Activated CD4-positive, alpha-beta T cell treated with anti-CD3 and anti-CD28 coated beads, Interleukin-2, amount 10 ng/mL, durations not matched to agents 24 days and 14 days (primary cell): ENCODE measurements at regions of chr13 and their contacts with region 1.

Region 1: DNA sequence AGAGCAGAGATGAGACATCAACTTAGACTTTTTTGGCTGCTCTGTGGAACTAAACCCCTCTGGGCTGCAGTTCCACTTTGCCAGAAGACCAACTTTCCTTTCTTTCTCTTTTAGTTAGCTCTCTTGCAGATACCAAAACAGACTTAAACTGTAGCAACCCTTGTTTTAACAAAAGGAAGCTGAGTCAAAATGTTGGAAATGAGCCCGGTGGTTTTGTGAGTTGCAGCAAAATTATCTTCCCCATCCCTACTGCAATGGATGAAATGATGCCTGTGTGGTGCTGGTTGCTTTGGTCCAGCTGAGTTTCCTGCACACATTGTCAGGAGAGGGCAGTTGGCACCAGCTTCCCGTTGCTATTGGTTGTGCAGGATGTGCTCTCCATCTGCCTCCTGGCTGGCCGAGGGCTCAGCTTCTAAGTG is 115.3 kb downstream of the LRCH1 start:
- DNase-seq: peak; percentile 77
- H3K4me3 Mint-ChIP-seq: peak overlapping the region; percentile 88
- H3K27ac Mint-ChIP-seq: peak overlapping the region; percentile 85
- H3K4me1 Mint-ChIP-seq: peaks cover 50% of the 10 kb centered on the region
- H3K27me3 Mint-ChIP-seq: no peaks in the 10 kb centered on the region

Region 2: DNA sequence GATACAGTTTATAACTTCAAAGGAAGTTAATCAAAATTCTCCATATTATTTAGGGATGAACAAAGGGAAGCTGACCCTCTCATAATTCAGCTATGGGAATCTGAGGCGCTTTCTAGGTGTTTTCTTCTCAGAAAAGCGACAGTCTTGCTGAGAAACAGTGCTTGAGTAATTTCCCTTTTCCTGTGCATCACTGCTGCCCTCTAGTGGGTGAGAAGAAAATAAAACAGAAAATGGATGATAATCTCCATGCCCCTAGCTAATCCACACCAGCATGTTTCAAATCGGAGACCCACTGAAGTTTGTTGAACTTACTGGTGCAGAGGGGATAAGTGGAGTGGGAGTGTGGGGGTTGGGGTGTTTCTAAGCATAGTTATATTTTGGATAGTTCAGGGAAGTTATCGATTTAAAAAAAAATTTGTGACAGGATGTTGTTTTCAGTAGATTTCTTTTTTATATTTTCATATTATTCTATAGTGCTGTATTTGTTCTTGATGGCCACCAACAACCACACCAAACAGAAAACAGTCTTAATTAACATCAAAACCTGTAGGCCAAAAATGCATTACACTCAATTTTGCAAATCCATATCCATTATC is 507.7 kb before region 1 on chr13:
- intact Hi-C with region 1: loop called (anchors 10 kb)
- DNase-seq: peak; percentile 85
- H3K4me3 Mint-ChIP-seq: peak overlapping the region; percentile 76
- H3K27ac Mint-ChIP-seq: peak overlapping the region; percentile 83
- H3K4me1 Mint-ChIP-seq: peaks cover 48% of the 10 kb centered on the region
- H3K27me3 Mint-ChIP-seq: no peaks in the 10 kb centered on the region

Region 3: DNA sequence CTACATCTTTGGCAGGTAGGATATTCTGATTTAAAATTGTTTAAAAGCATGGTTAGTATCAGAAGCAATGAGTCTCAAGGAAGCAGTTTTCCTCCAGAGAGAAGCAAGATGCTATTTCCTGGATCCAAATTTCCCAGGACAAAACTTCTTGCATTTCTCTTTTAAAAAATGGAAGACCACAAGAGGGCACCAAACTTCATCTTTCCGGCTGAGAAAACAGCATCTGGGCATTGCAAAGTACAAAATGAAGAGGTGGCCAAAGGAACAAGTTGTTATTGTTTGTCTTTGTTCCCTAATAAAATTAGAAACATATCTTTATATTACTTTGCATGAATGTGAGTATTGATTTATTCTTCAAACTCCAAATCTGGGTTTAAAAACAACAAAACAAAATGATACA is 175.4 kb before region 1 on chr13:
- intact Hi-C with region 1: no loop called
- DNase-seq: peak; percentile 71
- H3K4me3 Mint-ChIP-seq: no peak overlapping the region
- H3K27ac Mint-ChIP-seq: no peak overlapping the region
- H3K4me1 Mint-ChIP-seq: peaks cover 3% of the 10 kb centered on the region
- H3K27me3 Mint-ChIP-seq: no peaks in the 10 kb centered on the region

Region 4: GRCh38 chr13:46577696-46578589 is 90.4 kb before region 1 on chr13:
- intact Hi-C with region 1: loop called (anchors 5 kb)
- DNase-seq: no peak
- H3K4me3 Mint-ChIP-seq: peak overlapping the region; percentile 45
- H3K27ac Mint-ChIP-seq: peak overlapping the region; percentile 65
- H3K4me1 Mint-ChIP-seq: peaks cover 46% of the 10 kb centered on the region
- H3K27me3 Mint-ChIP-seq: no peaks in the 10 kb centered on the region

Region 5: DNA sequence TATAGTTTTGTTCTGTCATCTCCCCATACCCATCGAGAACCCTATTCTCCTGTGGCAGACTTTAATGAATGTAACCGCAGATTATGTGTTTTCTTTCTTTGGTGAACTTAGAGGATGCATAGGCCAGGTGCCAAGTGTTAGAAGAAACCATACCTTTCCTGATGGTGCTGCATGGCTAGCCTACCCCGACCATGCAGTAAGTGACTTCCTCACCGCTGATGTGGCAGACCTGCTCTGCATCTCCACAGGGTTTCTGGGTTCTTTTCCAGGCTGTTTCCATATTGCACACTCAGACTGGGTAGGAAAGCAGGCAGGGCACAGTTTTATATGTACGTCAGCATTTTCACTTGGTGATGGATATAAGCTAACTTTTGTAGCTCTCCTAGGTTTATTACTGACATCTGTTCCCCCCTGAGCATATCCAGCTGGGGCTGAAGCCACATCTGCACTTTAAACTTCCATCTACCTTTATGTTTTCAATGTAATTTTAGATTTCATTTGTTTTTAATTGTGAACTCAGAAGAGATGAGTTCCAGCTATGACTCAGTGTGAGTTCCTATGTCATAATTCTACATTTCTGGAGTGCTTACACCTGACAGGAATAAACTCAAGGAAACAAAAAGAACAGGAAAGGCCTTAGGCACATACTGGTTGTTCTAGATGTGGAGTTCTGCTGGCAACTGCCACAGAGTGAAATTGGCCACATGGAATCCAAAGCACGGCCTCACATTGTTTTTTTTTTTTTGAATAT is 73.0 kb before region 1 on chr13:
- intact Hi-C with region 1: loop called (anchors 1 kb)
- DNase-seq: no peak
- H3K4me3 Mint-ChIP-seq: no peak overlapping the region
- H3K27ac Mint-ChIP-seq: no peak overlapping the region
- H3K4me1 Mint-ChIP-seq: peaks cover 60% of the 10 kb centered on the region
- H3K27me3 Mint-ChIP-seq: peaks cover 5% of the 10 kb centered on the region

Region 6: GRCh38 chr13:46655377-46656180 is 12.7 kb before region 1 on chr13:
- intact Hi-C with region 1: loop called (anchors 1 kb)
- DNase-seq: peak; percentile 65
- H3K4me3 Mint-ChIP-seq: peak overlapping the region; percentile 55
- H3K27ac Mint-ChIP-seq: peak overlapping the region; percentile 34
- H3K4me1 Mint-ChIP-seq: peaks cover 31% of the 10 kb centered on the region
- H3K27me3 Mint-ChIP-seq: no peaks in the 10 kb centered on the region

Region 7: DNA sequence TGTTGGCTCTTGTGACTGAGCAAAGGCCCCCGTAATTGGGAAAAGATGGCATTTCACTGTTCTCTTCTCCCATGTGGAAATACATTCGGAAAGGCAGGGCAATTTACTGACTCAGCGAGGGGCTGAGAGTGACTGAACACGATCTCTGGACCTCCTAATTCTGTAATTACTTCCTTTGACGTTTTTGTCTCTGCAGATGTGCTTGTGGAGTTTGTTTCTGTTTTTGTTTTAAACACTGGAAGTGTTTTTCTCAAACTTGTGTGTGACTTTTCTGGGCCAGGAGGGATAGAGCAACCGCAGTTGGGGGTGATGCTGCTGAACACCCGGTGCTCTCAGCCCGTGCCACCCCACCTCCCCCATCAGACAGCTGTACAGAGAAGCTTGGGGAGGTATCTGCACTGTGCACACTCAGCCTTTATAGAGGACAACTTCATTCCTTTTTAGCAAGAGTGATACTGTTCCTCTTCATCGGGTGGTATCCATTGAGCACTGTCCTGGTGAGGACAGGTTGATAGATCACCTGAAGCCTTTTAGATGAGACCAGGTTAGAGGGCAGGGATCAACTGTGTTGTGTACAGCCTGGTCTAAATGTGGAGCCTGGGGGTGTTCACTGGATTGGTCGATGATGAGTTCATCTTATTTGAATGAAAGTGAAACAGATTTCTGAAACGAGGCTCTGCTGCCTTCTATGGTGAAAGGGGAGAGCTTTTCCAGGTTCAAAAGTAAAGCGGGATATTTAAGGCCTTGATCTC is 11.2 kb after region 1 on chr13:
- intact Hi-C with region 1: loop called (anchors 1 kb)
- DNase-seq: peak; percentile 86
- H3K4me3 Mint-ChIP-seq: no peak overlapping the region
- H3K27ac Mint-ChIP-seq: no peak overlapping the region
- H3K4me1 Mint-ChIP-seq: peaks cover 26% of the 10 kb centered on the region
- H3K27me3 Mint-ChIP-seq: no peaks in the 10 kb centered on the region

Region 8: DNA sequence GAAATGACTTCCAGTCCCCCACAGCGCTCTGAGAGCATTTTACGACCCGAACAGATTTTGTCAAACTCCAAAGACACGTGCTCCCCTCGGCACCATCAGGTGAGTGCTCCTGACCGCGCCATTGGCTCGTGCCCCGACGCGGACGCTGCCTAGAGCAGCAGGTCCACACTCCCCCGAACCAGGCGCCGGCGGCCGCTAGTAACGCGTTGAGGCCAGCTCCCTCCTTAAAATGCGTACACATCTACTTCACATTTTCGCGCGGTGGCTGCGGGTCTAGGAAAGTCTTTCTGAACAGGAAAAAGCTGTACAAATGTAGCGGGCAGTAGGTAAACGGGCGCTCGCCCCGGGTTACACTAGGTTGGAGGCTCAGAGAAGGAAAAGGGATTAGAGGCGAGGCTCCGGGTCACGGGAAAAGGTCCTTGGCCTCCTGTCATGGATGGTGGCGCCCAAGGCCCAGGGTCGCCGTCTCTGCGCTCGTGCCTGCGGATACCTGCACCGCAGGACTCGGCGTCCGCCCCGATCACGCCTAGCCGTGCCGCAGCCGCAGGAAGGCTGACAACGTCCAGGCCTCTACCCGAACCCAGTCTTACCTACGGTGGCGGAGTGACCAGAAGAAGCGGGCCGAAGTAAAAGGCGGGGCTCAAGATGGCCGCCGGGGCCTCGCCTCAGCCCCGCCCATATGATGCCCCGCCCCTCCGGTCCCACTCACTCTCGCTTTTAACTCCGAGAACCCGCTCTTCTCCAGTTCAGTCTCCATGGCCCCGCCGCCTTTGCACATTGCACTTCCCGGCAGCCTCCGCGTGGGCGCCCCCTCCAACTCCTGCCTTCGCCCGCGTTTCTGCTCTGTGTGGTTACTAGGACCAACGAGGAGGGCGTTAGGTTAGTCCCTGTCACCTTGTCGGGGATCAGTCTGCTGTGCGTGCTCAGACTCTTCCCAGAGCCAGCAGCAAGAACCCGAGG is 128.5 kb after region 1 on chr13 and contains the start of gene ESD:
- intact Hi-C with region 1: loop called (anchors 5 kb)
- DNase-seq: peak; percentile 97
- H3K4me3 Mint-ChIP-seq: peak within 1 kb of the TSS; percentile 96
- H3K27ac Mint-ChIP-seq: peak within 1 kb of the TSS; percentile 98
- H3K4me1 Mint-ChIP-seq: peaks cover 27% of the 10 kb centered on the region
- H3K27me3 Mint-ChIP-seq: peaks cover 4% of the 10 kb centered on the region
- total RNA-seq, gene ESD: 127 and 128 TPM in 2 replicates

Region 9: GRCh38 chr13:46926916-46927590 is 258.7 kb after region 1 on chr13:
- intact Hi-C with region 1: no loop called
- DNase-seq: no peak
- H3K4me3 Mint-ChIP-seq: no peak overlapping the region
- H3K27ac Mint-ChIP-seq: no peak overlapping the region
- H3K4me1 Mint-ChIP-seq: no peaks in the 10 kb centered on the region
- H3K27me3 Mint-ChIP-seq: no peaks in the 10 kb centered on the region